Testis (tissue), 5 donors: ENCODE measurements at regions of chr17 and their contacts with region 1.

Region 1: GRCh38 chr17:63537991-63538692 is 12.1 kb upstream of the DCAF7 start:
- DNase-seq: no peak
- H3K4me3 ChIP-seq: peak overlapping the region in 1 of 2 donors; percentile 31
- H3K27ac ChIP-seq: no peak overlapping the region
- H3K4me1 ChIP-seq: peaks cover 11% of the 10 kb centered on the region
- H3K27me3 ChIP-seq: no peaks in the 10 kb centered on the region
- CTCF ChIP-seq: no peak
- POLR2A ChIP-seq: no peak

Region 2: DNA sequence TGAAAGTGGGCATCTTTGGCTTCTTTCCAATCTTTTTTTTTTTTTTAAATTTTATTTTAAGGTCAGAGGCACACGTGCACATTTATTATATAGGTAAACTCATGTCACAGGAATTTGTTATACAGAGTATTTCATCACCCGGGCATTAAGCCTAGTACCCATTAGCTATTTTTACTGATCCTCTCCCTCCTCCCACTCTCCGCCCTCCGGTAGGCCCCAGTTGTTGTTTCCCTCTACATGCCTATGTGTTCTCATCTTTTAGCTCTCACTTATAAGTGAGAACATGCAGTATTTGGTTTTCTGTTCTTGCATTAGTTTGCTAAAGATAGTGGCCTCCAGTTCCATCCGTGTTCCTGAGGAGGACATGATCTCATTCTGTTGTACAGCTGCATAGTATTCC is 200.6 kb before region 1 on chr17:
- intact Hi-C with region 1: no loop called
- DNase-seq: no peak
- H3K4me3 ChIP-seq: no peak overlapping the region
- H3K27ac ChIP-seq: no peak overlapping the region
- H3K4me1 ChIP-seq: no peaks in the 10 kb centered on the region
- H3K27me3 ChIP-seq: no peaks in the 10 kb centered on the region
- CTCF ChIP-seq: no peak
- POLR2A ChIP-seq: no peak

Region 3: DNA sequence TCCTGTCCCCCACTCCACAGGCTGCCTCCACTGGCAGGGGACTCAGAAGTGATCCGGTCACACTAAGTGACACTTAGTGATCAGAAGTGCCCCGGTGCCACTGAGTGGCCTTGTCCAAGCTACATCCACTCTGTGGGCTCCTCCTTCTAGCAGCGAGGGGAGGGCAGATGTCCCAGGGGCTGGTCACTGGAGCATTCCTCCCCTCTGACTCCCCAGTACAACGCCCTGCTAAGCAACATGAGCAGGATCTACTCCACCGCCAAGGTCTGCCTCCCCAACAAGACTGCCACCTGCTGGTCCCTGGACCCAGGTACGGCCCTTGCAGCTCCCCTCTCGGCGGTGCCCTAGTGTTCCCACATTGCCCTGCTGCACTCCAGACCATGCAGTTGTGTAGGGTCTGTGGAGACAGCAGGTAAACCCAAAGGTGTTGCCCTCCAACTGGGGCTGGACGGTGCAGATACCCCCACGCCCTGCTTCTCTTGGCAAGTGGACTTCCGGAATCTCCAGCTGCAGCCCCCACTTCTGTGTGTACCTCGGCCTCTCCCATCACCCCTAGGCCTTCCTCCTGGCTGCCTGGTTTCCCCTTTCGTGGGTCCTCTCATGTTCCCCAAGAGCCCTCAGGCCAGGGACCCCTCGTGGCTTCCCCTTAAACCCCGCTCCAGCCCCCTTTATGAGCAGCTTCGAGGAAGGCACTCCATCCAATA is 59.2 kb before region 1 on chr17:
- intact Hi-C with region 1: loop called (anchors 10 kb)
- DNase-seq: peak; percentile 83
- H3K4me3 ChIP-seq: no peak overlapping the region
- H3K27ac ChIP-seq: no peak overlapping the region
- H3K4me1 ChIP-seq: peaks cover 32% of the 10 kb centered on the region
- H3K27me3 ChIP-seq: no peaks in the 10 kb centered on the region
- CTCF ChIP-seq: peak; percentile 57 to 62 (median 59)
- POLR2A ChIP-seq: no peak